ENCODE measurements at regions of chr12 and their contacts with region 1.

Region 1: GRCh38 chr12:26126340-26127284 is 1.8 kb upstream of the BHLHE41 start:
- DNase-seq: peak; percentile 88

Region 2: GRCh38 chr12:26153421-26154154 is 27.0 kb after region 1 on chr12:
- intact Hi-C with region 1: loop called (anchors 1 kb)
- DNase-seq: no peak

Region 3: DNA sequence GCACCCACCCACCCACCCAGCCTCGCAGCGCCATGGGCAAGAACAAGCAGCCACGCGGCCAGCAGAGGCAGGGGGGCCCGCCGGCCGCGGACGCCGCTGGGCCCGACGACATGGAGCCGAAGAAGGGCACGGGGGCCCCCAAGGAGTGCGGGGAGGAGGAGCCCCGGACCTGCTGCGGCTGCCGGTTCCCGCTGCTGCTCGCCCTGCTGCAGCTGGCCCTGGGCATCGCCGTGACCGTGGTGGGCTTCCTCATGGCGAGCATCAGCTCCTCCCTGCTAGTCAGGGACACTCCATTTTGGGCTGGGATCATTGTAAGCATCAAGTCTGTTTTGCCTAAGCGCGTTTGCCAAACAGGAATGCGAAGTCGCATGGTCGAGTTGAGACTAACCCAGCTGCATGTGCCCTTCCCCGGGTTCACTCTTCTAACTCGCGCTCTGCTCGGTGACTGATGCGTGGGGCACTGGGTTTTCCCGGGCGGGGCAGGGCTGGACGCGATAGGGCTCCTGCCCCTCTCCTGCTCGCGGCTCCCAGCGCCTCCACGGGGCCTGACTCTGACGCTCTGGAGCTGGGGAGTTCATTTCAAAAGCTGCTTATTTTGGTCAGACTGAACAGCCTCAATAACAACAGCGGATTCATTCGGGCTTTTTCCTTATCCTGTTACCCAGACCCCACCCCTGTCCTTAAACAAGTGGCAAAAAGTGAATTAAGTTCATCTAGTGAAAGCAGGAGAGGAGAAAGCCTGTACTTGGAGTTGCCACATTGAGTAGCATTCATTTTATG is 69.2 kb after region 1 on chr12:
- intact Hi-C with region 1: loop called (anchors 1 kb)
- DNase-seq: peak; percentile 80

Region 4: GRCh38 chr12:26239122-26239851 is 112.7 kb after region 1 on chr12:
- intact Hi-C with region 1: loop called (anchors 5 kb)
- DNase-seq: peak; percentile 84

Region 5: GRCh38 chr12:26274441-26275312 is 148.1 kb after region 1 on chr12:
- intact Hi-C with region 1: loop called (anchors 2 kb)
- DNase-seq: peak; percentile 90

Region 6: GRCh38 chr12:26298785-26299621 is 172.4 kb after region 1 on chr12:
- intact Hi-C with region 1: loop called (anchors 2 kb)
- DNase-seq: no peak

Region 7: GRCh38 chr12:26614020-26614616 is 487.5 kb after region 1 on chr12:
- intact Hi-C with region 1: loop called (anchors 10 kb)
- DNase-seq: no peak

Region 8: DNA sequence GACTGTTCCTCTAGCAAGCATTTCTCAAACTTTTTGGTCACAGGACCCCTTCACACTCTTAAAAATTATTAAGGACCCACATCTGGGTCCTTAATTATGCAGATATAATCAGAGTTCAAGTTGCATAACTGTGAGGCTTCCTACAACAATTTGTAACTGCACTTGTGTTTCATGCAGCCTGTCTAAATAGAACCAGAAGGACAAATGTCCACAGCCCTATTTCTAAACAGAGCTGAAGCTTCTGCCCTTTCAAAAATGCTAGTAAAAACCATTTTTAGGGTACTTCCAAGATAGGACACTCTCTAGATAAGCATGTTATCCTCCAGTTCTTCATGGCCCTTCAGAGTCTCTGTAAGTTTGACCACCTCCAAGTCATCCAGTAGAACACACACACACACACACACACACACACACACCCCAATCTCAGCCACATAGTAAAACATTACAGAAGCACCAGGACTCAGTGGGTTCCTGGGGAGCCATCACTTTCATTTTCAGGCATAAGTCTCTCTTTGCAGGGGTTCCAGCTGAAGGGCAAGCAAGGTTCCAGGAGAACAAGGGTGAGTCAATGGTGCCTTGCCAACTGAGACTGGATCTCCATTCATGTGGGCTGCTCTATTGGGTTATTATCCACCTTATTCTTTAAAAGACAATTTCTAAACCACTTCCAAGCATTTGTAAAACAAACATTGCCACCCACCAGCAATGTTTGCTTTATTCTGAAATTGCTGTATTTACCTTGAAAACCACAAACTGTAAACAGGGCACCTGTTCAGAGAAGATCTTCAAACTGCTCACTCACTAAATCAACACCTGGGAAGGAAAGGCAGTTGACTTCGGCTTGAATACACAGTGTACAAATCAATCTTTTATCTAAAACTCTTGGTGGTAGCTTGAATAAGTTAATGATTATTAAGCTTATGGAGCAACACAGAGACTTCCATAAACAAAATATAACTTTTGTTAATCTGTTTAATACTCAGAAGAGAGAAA is 642.3 kb after region 1 on chr12:
- intact Hi-C with region 1: no loop called
- DNase-seq: no peak